Activated naive CD4-positive, alpha-beta T cell treated with anti-CD3 and anti-CD28 coated beads for 36 hours (primary cell): ENCODE measurements at regions of chr7 and their contacts with region 1.

Region 1: DNA sequence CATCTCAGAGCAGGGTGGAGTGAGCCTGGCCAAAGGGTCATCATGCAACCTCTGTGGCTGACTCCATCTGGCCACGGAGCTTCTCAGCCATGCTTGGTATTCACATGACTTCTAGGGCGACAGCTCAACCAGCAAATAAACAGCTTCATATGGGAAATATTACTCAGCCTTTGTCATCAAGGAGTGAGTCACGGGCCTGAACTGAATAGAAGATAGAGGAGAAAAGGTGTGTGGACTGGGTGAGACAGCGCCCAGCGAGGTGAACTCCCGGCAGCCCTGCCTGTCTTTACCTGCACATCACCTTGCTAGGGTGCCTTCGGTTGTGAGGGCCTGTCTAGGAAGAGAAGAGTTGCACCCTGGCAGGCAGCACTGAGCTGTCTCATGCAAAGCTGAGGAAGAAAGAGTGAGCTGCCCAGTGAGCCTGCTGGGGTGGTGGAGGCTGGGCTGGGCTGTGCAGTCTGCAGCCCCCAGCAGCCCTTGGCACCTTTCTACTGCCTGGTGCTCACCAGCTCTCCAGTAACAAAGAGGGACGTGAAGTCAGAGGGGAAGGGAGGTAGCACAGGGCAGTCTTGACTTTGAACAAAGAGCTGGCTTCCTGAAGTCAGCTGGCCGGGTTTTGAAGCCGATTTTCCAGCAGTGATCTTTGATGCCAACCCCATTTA is 114.2 kb downstream of the EGFR start:
- DNase-seq: peak; percentile 52
- H3K4me3 Mint-ChIP-seq: no peak overlapping the region
- H3K27ac Mint-ChIP-seq: peak overlapping the region; percentile 72
- H3K4me1 Mint-ChIP-seq: peaks cover 14% of the 10 kb centered on the region
- H3K27me3 Mint-ChIP-seq: peaks cover 5% of the 10 kb centered on the region

Region 2: GRCh38 chr7:54541669-54542625 is 591.1 kb before region 1 on chr7 and contains the start of gene VSTM2A:
- CTCF ChIA-PET with region 1: no interaction called
- intact Hi-C with region 1: no loop called
- DNase-seq: no peak
- H3K4me3 Mint-ChIP-seq: no peak within 1 kb of the TSS
- H3K27ac Mint-ChIP-seq: no peak within 1 kb of the TSS
- H3K4me1 Mint-ChIP-seq: peaks cover 3% of the 10 kb centered on the region
- H3K27me3 Mint-ChIP-seq: peaks cover 32% of the 10 kb centered on the region
- total RNA-seq, gene VSTM2A: not detected

Region 3: DNA sequence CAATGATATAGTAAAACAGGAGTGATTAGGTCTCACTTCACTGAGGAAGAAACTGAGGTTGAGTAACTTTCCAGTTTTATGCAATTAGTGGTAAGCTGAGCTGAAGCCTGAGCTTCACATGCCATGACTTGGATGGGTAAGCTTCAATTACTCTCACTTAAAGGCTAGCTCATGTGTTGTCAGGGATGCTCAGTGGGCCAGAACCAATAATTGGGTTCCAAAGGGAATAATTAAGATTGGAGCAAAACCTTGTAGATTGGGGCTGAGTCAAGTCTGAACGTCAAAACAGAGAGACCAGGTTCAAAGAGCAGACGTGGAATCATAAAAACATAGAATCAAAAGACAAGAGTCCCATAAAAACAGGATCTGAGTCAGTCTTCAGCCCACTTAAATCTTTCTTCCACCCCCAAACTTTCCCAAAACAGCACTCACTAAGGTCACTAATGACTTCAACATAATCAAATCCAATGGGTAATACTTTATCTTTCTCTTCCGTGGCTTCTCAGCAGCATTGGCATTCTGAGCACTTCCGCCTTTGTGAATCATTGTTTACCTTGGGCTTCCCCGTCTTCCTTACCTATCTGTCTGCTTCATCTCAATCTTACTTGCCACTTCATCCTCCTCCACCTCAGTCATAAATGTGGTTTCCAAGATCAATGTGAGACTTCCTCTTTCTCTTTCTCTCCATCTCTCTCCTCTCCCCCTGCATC is 137.2 kb before region 1 on chr7:
- CTCF ChIA-PET with region 1: no interaction called
- intact Hi-C with region 1: loop called (anchors 1 kb)
- DNase-seq: peak; percentile 59
- H3K4me3 Mint-ChIP-seq: no peak overlapping the region
- H3K27ac Mint-ChIP-seq: peak overlapping the region; percentile 87
- H3K4me1 Mint-ChIP-seq: peaks cover 25% of the 10 kb centered on the region
- H3K27me3 Mint-ChIP-seq: peaks cover 5% of the 10 kb centered on the region

Region 4: GRCh38 chr7:55073945-55074499 is 59.0 kb before region 1 on chr7:
- CTCF ChIA-PET with region 1: no interaction called
- intact Hi-C with region 1: loop called (anchors 2 kb)
- DNase-seq: peak; percentile 10
- H3K4me3 Mint-ChIP-seq: no peak overlapping the region
- H3K27ac Mint-ChIP-seq: peak overlapping the region; percentile 61
- H3K4me1 Mint-ChIP-seq: peaks cover 13% of the 10 kb centered on the region
- H3K27me3 Mint-ChIP-seq: peaks cover 6% of the 10 kb centered on the region

Region 5: GRCh38 chr7:55086413-55087201 is 46.4 kb before region 1 on chr7:
- CTCF ChIA-PET with region 1: no interaction called
- intact Hi-C with region 1: loop called (anchors 5 kb)
- DNase-seq: peak; percentile 27
- H3K4me3 Mint-ChIP-seq: no peak overlapping the region
- H3K27ac Mint-ChIP-seq: no peak overlapping the region
- H3K4me1 Mint-ChIP-seq: peaks cover 14% of the 10 kb centered on the region
- H3K27me3 Mint-ChIP-seq: peaks cover 11% of the 10 kb centered on the region

Region 6: GRCh38 chr7:55206235-55207029 is 73.4 kb after region 1 on chr7:
- CTCF ChIA-PET with region 1: no interaction called
- intact Hi-C with region 1: loop called (anchors 5 kb)
- DNase-seq: peak; percentile 18
- H3K4me3 Mint-ChIP-seq: no peak overlapping the region
- H3K27ac Mint-ChIP-seq: no peak overlapping the region
- H3K4me1 Mint-ChIP-seq: no peaks in the 10 kb centered on the region
- H3K27me3 Mint-ChIP-seq: no peaks in the 10 kb centered on the region